ENCODE measurements at regions of chr10 and their contacts with region 1.

Region 1: DNA sequence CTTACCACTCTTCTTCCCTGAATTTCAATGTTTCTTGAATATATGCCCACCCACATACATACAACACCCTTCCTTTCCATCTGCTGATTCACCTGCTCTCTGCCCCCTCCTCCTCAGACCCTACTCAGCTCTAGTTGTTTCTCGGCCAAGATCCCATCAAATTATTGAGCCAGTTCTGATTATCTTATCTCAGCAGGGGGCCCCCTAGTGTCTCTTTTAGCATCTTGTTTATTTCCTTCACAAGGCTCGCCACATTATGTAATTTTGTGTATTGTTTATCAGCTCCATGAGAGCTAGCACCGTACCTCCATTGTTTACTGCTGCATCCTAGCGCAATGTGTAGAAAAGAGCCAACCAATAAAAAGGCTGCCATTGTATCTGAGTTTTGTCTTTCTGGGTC is 71.9 kb downstream of the FAM13C start:
- DNase-seq: peak in 1 of 42 donors; percentile 64

Region 2: DNA sequence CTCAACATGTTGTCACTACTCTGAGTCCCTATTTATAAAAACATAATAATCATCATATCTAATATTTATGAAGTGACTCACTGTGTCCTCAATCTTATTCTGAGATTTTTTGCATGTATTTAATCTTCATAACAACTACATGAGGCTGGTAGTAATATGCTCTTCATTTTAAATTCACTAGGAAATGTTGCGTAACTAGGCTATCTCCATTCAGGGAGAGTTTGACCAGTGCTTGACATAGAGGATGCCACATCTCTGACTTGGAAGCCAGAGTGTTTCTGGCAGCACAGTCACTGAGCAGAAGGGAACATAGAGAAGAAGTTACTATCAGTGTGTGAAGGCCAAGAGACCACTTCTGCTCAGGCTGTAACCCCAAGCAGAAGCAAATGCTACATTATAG is 17.0 kb before region 1 on chr10:
- intact Hi-C with region 1: no loop called
- DNase-seq: peak in 1 of 42 donors; percentile 46

Region 3: DNA sequence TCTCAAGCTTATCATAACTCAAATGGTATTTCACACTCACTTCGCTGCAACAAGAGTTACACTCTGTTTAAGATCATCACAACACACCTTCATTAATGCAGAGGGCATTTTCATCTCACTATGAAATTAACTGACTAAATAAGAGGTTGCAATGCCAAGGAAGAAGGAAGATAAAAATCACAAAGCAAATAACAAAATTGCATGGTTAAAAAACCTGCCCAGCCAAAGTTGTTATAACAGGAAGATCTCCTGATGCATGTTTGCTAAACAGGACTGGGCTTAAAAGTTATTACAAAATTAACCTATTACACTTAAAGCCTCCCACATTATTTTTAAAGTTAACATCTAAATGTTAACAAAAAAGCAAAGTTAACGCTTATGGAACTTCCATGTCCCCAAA is 60.1 kb after region 1 on chr10:
- intact Hi-C with region 1: loop called (anchors 2 kb)
- DNase-seq: no peak